Endothelial cell of umbilical vein (primary cell): ENCODE measurements at regions of chr9 and their contacts with region 1.

Region 1: DNA sequence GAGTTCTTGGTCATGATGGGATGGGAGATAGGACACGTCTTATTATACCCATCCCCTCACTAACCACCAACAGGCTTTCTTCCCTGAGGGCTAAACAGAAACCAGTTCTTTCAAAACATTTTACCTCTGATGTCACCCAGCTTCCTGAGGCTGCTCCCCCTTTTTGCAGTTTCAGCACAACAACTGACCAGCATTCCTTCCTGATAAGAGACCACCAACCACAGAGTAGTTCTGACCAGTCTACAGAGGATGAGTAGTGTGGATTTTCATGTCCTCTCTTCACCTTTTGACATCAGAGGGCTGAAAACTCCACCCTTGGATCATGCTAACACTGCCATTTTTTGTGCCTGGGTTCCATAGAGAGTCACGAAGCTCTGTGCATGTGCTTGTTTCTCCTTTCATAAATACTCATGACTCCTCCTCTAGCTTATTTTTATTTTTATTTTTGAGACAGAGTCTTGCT is 82.6 kb downstream of the OSTF1 start:
- DNase-seq: no peak
- H3K4me3 ChIP-seq: no peak overlapping the region
- H3K27ac ChIP-seq: no peak overlapping the region
- H3K4me1 ChIP-seq: peaks cover 33% of the 10 kb centered on the region
- H3K27me3 ChIP-seq: no peaks in the 10 kb centered on the region
- CTCF ChIP-seq: no peak
- POLR2A ChIP-seq: no peak

Region 2: DNA sequence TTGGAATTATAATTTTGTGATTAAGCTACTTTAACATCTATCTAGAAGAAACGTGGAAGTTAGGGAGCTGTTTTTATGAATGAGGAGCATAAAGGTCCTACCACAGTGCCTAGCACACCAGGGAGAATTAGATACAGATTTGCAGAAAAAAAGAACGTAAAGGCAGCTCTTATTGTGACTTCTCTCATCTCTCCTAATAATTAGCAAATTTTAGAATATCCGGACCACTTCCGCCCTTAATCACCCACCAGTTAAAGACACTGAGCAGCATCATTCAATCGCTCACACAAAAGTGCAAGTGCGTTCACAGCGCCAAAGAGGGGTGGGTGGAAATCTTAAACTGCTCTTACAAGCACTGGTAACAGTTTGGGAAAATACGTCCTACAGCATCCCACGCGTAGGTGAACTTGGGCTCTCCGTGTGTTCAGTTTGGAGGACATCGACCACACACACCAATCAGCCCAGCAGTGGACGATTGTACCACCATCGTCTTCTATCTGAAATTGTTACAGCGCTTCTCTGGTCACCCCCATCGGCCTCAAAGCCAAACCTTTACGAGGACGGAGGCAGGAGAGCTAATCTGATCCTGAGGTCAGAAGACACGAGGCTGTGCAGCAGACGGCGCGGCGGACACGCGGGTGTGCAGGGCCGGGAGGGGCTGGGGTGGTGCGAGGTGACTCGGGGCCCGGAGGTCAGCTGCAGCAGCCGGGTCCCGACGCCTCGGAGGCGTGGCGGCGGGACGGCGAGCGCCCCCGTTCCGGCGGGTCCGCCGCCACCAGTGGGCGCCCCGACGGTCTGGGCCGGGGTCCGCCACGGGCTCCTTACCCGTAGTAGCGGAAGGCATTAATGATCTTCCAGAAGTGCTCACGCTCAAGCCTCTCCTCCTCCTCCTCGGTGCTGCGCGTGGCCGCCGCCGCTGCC is 143.5 kb before region 1 on chr9:
- CTCF ChIA-PET with region 1: no interaction called
- POLR2A ChIA-PET with region 1: no interaction called
- dilution Hi-C with region 1: no loop called
- intact Hi-C with region 1: loop called (anchors 5 kb)
- DNase-seq: peak; percentile 53
- H3K4me3 ChIP-seq: peak overlapping the region; percentile 15 to 68 (median 61)
- H3K27ac ChIP-seq: peak overlapping the region; percentile 43
- H3K4me1 ChIP-seq: peaks cover 9% of the 10 kb centered on the region
- H3K27me3 ChIP-seq: peaks cover 1 to 2% of the 10 kb centered on the region in 2 experiments
- CTCF ChIP-seq: peak in 1 of 2 donors; percentile 21
- POLR2A ChIP-seq: peak; percentile 10

Region 3: DNA sequence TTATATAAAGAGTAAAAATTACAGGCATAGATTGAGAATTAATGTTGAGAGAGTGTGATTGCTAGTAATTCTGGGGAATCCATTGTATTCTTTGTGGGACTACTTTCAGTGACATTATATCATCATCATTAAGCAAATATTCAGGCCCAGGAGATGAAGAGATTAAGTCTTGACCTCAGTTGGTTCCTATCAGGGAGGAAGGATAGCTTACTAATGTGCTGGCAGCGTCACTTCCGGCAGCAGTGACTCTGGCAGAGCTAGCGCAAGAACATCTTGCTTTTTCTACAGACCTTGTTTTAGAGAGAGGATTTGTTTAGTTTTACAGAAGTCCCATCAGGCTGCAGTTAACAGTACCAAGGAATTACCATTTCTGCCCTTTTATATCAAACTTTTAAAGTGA is 62.4 kb before region 1 on chr9:
- CTCF ChIA-PET with region 1: interaction called, 5 read pairs
- POLR2A ChIA-PET with region 1: interaction called, 5 read pairs
- dilution Hi-C with region 1: no loop called
- intact Hi-C with region 1: loop called (anchors 1 kb)
- DNase-seq: peak; percentile 80
- H3K4me3 ChIP-seq: peak overlapping the region in 1 of 3 experiments; percentile 23
- H3K27ac ChIP-seq: peak overlapping the region; percentile 73
- H3K4me1 ChIP-seq: peaks cover 33% of the 10 kb centered on the region
- H3K27me3 ChIP-seq: no peaks in the 10 kb centered on the region
- CTCF ChIP-seq: no peak
- POLR2A ChIP-seq: peak; percentile 26

Region 4: DNA sequence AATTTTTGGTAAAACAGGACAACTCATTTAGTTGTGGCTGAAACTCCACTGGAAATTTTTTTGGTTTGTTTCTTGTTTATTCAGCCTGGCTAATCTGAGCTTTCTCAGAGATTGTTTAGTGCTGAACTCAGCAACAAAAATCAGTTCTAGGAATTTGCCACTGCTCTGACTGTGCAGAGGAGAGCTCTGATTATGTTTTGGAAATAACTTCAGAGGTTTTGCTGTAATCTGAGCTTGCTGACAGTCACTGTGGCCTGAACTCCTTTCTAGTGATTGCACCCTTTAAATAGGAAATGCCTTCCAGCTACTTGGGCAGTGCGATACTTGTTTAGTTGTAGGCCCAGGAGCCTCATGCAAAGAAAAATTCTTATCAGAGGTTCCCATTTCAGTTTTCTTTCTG is 22.4 kb before region 1 on chr9:
- CTCF ChIA-PET with region 1: interaction called, 5 read pairs
- POLR2A ChIA-PET with region 1: interaction called, 5 read pairs
- dilution Hi-C with region 1: no loop called
- intact Hi-C with region 1: loop called (anchors 1 kb)
- DNase-seq: peak; percentile 87
- H3K4me3 ChIP-seq: no peak overlapping the region
- H3K27ac ChIP-seq: peak overlapping the region; percentile 81
- H3K4me1 ChIP-seq: peaks cover 19% of the 10 kb centered on the region
- H3K27me3 ChIP-seq: no peaks in the 10 kb centered on the region
- CTCF ChIP-seq: no peak
- POLR2A ChIP-seq: no peak